MCF 10A (cell line): ENCODE measurements at regions of chr2 and their contacts with region 1.

Region 1: DNA sequence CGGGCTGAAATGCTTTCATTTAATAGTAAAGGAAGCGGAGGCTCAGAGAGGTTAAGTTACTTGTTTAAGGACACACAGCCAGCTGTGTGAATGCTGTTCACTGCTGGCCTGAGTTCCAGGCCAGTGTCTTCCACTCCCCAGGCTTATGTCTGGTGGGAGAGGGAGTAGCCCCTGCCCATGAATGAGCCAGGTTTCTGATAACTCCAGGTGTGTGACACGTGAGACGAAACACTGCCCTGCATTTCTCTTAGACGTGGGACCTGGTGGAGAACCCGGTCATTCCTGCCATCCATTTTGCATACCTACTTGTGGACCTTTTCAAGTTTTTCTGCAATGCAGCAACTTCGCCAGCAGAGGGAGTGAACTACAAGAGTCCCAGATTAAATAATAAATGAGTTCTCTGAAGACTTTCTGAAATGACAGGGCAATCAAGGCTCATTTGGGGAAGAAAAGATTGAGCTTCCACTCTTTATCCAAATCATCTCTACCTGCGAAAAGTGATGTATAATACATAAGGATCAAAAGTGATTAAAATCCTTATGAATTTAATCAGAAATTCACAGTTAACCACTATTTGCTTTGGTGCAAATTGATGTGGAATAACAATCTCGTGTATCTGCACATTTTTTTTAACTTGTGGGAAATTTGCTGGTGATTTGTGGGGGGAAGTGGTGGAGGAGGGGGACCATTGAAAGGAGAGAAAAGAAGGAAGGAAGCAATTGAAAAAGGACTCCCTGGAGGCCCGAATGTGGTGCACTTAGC is 79.4 kb upstream of the ASB18 start:
- DNase-seq: peak; percentile 73
- H3K4me3 Mint-ChIP-seq: no peak overlapping the region
- H3K27ac Mint-ChIP-seq: no peak overlapping the region
- H3K4me1 Mint-ChIP-seq: no peaks in the 10 kb centered on the region
- H3K27me3 Mint-ChIP-seq: peaks cover 27% of the 10 kb centered on the region
- CTCF ChIP-seq: peak; percentile 74

Region 2: GRCh38 chr2:235766278-235766677 is 577.3 kb before region 1 on chr2:
- CTCF ChIA-PET with region 1: interaction called, 6 read pairs
- POLR2A ChIA-PET with region 1: no interaction called
- intact Hi-C with region 1: loop called (anchors 5 kb)
- DNase-seq: peak; percentile 81
- H3K4me3 Mint-ChIP-seq: no peak overlapping the region
- H3K27ac Mint-ChIP-seq: peak overlapping the region; percentile 88
- H3K4me1 Mint-ChIP-seq: peaks cover 14% of the 10 kb centered on the region
- H3K27me3 Mint-ChIP-seq: no peaks in the 10 kb centered on the region
- CTCF ChIP-seq: peak; percentile 90

Region 3: GRCh38 chr2:236107942-236108625 is 235.5 kb before region 1 on chr2:
- CTCF ChIA-PET with region 1: no interaction called
- POLR2A ChIA-PET with region 1: no interaction called
- intact Hi-C with region 1: no loop called
- DNase-seq: no peak
- H3K4me3 Mint-ChIP-seq: no peak overlapping the region
- H3K27ac Mint-ChIP-seq: no peak overlapping the region
- H3K4me1 Mint-ChIP-seq: peaks cover 6% of the 10 kb centered on the region
- H3K27me3 Mint-ChIP-seq: no peaks in the 10 kb centered on the region
- CTCF ChIP-seq: no peak

Region 4: DNA sequence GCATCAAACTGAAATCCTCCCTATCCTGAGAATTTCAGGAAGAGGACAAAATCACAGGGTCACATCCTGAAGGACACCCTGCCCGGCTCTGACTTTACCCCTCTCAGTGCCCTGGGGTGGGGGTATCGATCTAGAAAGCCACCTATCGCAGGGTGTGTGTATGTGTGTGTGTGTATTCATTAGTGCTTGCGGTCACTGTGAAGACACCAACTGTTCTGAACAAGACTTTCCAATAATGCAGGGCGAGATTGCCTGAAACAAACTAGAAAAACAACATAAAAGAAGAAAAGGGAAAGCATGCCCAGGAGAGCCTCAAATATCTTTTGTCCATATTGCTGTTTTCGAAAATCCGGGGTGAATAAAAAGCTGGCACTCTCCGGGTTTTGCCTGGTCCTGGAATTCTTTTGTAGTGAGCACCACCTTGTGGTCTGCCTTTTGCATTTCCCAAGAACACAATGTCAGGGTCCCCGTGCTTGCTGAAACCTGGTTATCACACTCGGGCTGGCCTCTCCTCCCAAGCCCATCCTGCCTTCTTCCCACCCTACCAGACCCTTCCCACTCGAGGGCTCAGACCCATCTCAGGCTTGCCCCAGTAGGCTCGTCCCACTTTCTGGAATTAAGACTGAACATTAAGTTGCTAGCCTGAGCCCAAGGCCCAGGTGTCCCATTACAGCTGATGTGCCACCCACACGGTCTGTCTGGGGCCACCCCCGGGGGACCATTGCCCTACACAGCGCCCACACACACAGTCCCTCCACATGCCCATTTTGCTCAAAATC is 717.1 kb after region 1 on chr2:
- CTCF ChIA-PET with region 1: interaction called, 12 read pairs
- POLR2A ChIA-PET with region 1: interaction called, 3 read pairs
- intact Hi-C with region 1: loop called (anchors 1 kb)
- DNase-seq: peak; percentile 71
- H3K4me3 Mint-ChIP-seq: no peak overlapping the region
- H3K27ac Mint-ChIP-seq: no peak overlapping the region
- H3K4me1 Mint-ChIP-seq: peaks cover 11% of the 10 kb centered on the region
- H3K27me3 Mint-ChIP-seq: no peaks in the 10 kb centered on the region
- CTCF ChIP-seq: peak; percentile 75

Region 5: DNA sequence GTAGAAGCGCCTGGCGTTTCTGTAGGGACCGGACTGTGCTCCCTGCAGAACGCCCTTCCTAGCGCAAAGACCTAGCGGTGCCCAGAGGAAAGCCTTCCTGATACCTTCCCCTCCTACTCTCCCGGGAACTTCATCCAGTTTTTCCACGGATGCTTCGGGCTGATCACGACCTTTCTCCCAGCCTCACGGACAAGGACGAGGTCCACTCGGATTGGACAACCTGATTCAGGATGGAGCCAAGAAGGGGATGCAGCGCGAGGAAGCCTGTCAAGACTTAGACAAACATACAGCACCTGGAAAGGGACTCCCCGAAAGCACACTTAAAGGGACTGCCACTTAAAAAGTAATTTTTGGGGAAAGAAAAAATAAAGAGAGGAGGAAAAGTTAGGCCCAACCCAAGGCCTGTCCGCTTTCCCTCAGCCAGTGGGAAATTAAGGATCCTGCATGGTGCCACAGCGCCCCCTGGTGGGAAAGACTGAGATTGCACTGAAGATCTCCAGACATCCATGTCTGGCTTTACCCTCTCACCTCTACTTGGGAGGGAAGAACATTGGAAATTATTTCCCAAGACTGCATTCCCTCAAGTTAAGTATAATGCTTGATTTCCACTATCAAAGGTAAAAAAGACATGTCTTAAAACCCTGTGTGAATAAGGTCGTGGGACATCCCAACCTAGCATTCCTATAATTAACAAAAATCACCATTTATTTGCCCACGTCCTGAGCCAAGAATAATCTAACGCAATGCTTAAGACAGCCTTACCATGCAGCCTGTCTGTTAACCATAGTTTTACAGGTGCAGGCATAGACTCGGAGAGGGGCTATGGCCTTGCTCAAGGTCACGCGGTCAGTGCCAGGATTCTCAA is 728.7 kb after region 1 on chr2:
- CTCF ChIA-PET with region 1: interaction called, 6 read pairs
- POLR2A ChIA-PET with region 1: no interaction called
- intact Hi-C with region 1: loop called (anchors 1 kb)
- DNase-seq: peak; percentile 59
- H3K4me3 Mint-ChIP-seq: no peak overlapping the region
- H3K27ac Mint-ChIP-seq: no peak overlapping the region
- H3K4me1 Mint-ChIP-seq: peaks cover 8% of the 10 kb centered on the region
- H3K27me3 Mint-ChIP-seq: no peaks in the 10 kb centered on the region
- CTCF ChIP-seq: peak; percentile 91